ENCODE measurements at regions of chr2 and their contacts with region 1.

Region 1: GRCh38 chr2:9638532-9638931 is 7.7 kb upstream of the YWHAQ start:
- DNase-seq: peak; percentile 89
- H3K4me3 Mint-ChIP-seq: peak overlapping the region; percentile 31
- H3K27ac Mint-ChIP-seq: peak overlapping the region; percentile 63
- H3K4me1 Mint-ChIP-seq: peaks cover 50% of the 10 kb centered on the region
- H3K27me3 Mint-ChIP-seq: no peaks in the 10 kb centered on the region
- CTCF ChIP-seq: no peak

Region 2: GRCh38 chr2:9565436-9566153 is 72.9 kb before region 1 on chr2:
- CTCF ChIA-PET with region 1: no interaction called
- POLR2A ChIA-PET with region 1: no interaction called
- intact Hi-C with region 1: no loop called
- DNase-seq: peak; percentile 94
- H3K4me3 Mint-ChIP-seq: peak overlapping the region; percentile 67
- H3K27ac Mint-ChIP-seq: peak overlapping the region; percentile 97
- H3K4me1 Mint-ChIP-seq: peaks cover 9% of the 10 kb centered on the region
- H3K27me3 Mint-ChIP-seq: no peaks in the 10 kb centered on the region
- CTCF ChIP-seq: no peak

Region 3: GRCh38 chr2:9656270-9656766 is 17.8 kb after region 1 on chr2:
- CTCF ChIA-PET with region 1: interaction called, 4 read pairs
- POLR2A ChIA-PET with region 1: interaction called, 8 read pairs
- intact Hi-C with region 1: loop called (anchors 2 kb)
- DNase-seq: peak; percentile 92
- H3K4me3 Mint-ChIP-seq: no peak overlapping the region
- H3K27ac Mint-ChIP-seq: peak overlapping the region; percentile 25
- H3K4me1 Mint-ChIP-seq: peaks cover 43% of the 10 kb centered on the region
- H3K27me3 Mint-ChIP-seq: peaks cover 13% of the 10 kb centered on the region
- CTCF ChIP-seq: no peak

Measured in MCF 10A (cell line).